Vagina (tissue), 2 donors: ENCODE measurements at regions of chr5 and their contacts with region 1.

Region 1: GRCh38 chr5:42606464-42606881 is 150.1 kb upstream of the CCDC152 start:
- DNase-seq: no peak
- H3K4me3 ChIP-seq: no peak overlapping the region
- H3K27ac ChIP-seq: no peak overlapping the region
- H3K4me1 ChIP-seq: no peaks in the 10 kb centered on the region
- H3K27me3 ChIP-seq: no peaks in the 10 kb centered on the region
- CTCF ChIP-seq: no peak
- POLR2A ChIP-seq: no peak

Region 2: GRCh38 chr5:42761791-42762190 is 155.3 kb after region 1 on chr5:
- intact Hi-C with region 1: loop called (anchors 2 kb)
- DNase-seq: no peak
- H3K4me3 ChIP-seq: no peak overlapping the region
- H3K27ac ChIP-seq: no peak overlapping the region
- H3K4me1 ChIP-seq: no peaks in the 10 kb centered on the region
- H3K27me3 ChIP-seq: no peaks in the 10 kb centered on the region
- CTCF ChIP-seq: no peak
- POLR2A ChIP-seq: no peak

Region 3: DNA sequence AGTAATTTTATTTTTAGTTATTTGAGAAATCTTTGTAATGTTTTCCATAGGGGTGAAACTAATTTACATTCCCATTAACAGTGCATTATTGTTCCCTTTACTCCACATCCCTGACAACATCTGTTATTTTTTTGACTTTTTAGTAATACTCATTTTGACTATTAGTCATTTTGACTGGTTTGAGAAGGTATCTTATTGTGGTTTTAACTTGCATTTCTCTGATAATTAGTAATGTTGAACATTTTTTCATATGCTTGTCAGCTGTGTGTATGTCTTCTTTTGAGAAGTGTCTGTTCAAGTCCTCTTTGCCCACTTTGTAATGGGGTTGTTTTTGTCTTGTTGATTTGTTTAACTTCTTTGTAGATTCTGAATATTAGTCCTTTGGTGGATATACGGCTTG is 177.7 kb after region 1 on chr5:
- intact Hi-C with region 1: no loop called
- DNase-seq: no peak
- H3K4me3 ChIP-seq: no peak overlapping the region
- H3K27ac ChIP-seq: no peak overlapping the region
- H3K4me1 ChIP-seq: no peaks in the 10 kb centered on the region
- H3K27me3 ChIP-seq: no peaks in the 10 kb centered on the region
- CTCF ChIP-seq: no peak
- POLR2A ChIP-seq: no peak